AG04449 (cell line): ENCODE measurements at regions of chr19 and their contacts with region 1.

Region 1: GRCh38 chr19:47210689-47211316 is 20.2 kb downstream of the BBC3 start:
- DNase-seq: no peak
- H3K4me3 ChIP-seq: no peak overlapping the region
- CTCF ChIP-seq: peak; percentile 70

Region 2: GRCh38 chr19:47152224-47153017 is 58.4 kb before region 1 on chr19:
- CTCF ChIA-PET with region 1: interaction called, 39 read pairs
- POLR2A ChIA-PET with region 1: no interaction called
- DNase-seq: no peak
- H3K4me3 ChIP-seq: no peak overlapping the region
- CTCF ChIP-seq: no peak

Region 3: DNA sequence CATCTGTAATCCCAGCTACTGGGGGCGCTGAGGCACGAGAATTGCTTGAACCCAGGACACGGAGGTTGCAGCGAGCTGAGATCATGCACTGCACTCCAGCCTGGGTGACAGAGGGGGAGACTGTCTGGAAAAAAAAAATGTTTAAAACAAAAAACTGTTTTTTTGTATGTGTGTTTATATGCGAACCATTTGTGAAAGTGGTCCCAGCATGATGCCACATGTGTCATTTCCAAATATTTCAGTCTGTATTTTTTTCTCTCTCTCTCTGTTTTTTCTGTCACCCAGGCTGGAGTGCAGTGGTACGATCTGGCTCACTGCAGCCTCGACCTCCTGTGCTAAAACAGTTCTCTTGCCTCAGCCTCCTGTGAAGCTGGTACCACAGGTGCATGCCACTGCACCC is 42.7 kb before region 1 on chr19:
- CTCF ChIA-PET with region 1: interaction called, 18 read pairs
- POLR2A ChIA-PET with region 1: no interaction called
- DNase-seq: no peak
- H3K4me3 ChIP-seq: no peak overlapping the region
- CTCF ChIP-seq: no peak

Region 4: DNA sequence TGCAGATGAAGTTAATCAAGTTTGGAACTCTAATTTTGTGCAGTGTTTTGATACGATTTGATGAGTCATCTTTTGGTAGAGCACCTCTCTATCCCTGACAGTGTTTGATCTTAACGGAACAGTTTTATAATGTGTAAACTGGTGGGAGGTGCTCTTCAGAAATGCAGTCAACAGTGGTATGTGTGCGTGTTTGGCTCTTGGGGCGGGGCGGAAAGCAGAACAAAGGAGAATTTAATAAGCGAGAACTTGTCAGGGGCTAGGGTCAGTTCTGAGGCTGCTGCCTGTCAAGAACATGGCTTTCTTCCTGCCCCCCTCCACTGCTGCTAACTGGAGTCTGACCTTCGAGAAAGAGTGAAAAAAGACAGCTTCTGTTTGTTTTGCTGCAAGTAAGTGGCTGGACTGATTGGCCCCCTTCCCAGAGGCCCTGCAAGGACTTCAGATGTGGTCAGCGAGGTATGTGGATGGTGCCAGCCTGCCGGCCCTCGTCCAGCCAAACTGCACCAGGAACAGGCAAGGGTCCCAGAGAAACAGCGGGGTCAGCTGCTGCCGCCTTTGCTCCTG is 20.6 kb before region 1 on chr19:
- CTCF ChIA-PET with region 1: interaction called, 45 read pairs
- POLR2A ChIA-PET with region 1: interaction called, 3 read pairs
- DNase-seq: peak; percentile 37
- H3K4me3 ChIP-seq: no peak overlapping the region; the same call in 1 of the 2 replicates
- CTCF ChIP-seq: no peak

Region 5: GRCh38 chr19:47225746-47226425 is 15.1 kb after region 1 on chr19:
- CTCF ChIA-PET with region 1: interaction called, 145 read pairs
- POLR2A ChIA-PET with region 1: interaction called, 46 read pairs
- DNase-seq: no peak
- H3K4me3 ChIP-seq: peak overlapping the region; percentile 95
- CTCF ChIP-seq: peak; percentile 32

Region 6: DNA sequence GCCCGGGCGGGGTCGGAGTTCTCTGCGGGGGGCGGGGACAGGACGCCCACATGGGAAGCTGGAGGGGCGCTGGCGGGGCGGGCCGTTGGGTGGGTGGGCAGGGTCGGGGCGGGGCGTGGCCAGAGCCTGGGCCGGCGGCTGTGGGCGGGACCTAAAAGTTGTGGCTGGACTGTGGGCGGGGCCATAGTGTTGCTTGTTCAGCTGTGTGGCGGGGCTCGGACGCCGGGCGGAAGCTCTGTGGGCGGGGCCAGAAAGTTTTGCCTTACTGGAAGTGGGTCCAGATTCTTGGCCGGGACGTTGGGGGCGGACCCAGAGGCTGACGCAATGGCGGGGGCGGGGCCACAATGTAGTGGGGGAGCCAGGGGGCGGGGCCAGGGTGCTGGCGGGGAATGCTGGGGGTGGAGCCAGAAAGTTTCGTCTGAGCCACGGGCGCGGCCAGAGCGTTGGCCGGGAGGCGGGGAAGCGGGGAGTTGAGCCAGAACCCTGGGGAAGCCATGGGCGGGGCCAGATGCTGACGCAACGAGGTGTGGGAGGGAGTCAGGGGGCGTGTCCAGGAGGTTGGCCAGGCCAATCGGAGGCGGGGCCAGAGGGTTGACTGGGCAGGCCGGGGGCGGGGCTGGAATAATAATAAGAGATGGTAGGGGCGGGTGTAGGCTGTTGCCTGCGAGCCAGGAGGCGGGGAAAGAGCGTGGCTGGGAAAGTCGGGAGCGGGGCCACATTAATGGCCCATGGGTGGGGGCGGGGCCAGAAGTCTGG is 46.1 kb after region 1 on chr19:
- CTCF ChIA-PET with region 1: interaction called, 570 read pairs
- POLR2A ChIA-PET with region 1: no interaction called
- DNase-seq: peak; percentile 92
- H3K4me3 ChIP-seq: peak overlapping the region; percentile 71
- CTCF ChIP-seq: no peak

Region 7: DNA sequence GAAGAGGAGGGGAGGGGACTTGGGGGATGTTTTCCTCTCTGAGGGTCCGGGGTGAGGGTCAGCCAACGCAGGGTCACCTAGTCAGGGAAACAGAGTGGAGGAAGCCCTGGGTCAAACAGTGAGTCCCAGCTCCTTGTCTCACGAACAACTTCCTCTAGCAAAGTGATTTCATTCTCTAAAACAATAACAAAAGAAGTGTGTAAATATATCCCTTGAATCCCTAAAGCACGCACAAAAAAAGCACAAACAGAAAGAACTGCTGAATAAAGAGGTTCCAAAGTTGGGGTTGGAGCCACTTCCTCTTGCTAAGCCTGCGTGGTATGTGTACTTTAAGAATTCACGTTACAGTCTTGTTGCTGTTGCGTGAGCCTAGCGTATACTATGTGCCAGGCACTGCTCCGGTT is 119.7 kb after region 1 on chr19:
- CTCF ChIA-PET with region 1: no interaction called
- POLR2A ChIA-PET with region 1: no interaction called
- DNase-seq: no peak
- H3K4me3 ChIP-seq: no peak overlapping the region
- CTCF ChIP-seq: no peak